Activated T-helper 2 cell treated with anti-CD3 and anti-CD28 coated beads, Interferon-gamma antibody, Interleukin-2, Interleukin-4, amounts not matched to agents 10 μg/mL and 5 μg/mL and 100 μg/mL, durations not matched to agents 14 hours and 24 hours and 36 hours (primary cell): ENCODE measurements at regions of chr9 and their contacts with region 1.

Region 1: DNA sequence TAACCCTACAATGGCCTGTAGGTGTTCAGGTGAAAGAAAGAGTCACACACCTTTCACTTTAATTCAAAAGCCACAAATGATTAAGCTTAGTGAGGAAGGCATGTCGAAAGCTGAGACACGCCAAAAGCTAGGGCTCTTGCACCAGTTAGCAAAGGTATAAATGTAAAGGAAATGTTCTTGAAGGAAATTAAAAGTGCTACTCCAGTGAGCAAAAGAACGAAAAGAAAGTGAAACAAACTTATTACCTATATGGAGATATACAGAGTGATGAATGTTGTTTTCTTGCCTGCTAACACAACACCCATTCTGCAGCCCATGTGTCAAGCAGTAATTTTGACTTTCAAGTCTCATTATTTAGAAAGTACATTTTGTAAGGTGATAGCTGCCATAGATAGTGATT is 254.2 kb upstream of the SLC24A2 start:
- DNase-seq: no peak
- H3K4me3 Mint-ChIP-seq: peak overlapping the region; percentile 71
- H3K27ac Mint-ChIP-seq: peak overlapping the region; percentile 70
- H3K4me1 Mint-ChIP-seq: peaks cover 30% of the 10 kb centered on the region
- H3K27me3 Mint-ChIP-seq: peaks cover 2% of the 10 kb centered on the region

Region 2: DNA sequence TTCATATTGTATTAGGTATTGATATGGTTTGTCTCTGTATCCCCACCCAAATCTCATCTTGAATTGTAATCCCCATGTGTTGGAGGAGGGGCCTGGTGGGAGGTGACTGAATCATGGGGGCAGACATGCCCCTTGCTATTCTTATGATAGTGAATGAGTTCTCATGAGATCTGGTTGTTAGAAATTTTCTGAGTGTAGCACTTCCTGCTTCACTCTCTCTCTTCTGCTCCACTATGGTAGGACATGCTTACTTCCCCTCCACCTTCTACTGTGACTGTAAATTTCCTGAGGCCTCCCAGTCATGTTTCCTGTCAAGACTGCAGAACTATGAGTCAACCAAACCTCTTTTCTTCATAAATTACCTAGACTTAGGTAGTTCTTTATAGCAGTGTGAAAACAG is 66.8 kb before region 1 on chr9:
- intact Hi-C with region 1: loop called (anchors 2 kb)
- DNase-seq: no peak
- H3K4me3 Mint-ChIP-seq: no peak overlapping the region
- H3K27ac Mint-ChIP-seq: peak overlapping the region; percentile 83
- H3K4me1 Mint-ChIP-seq: peaks cover 28% of the 10 kb centered on the region
- H3K27me3 Mint-ChIP-seq: no peaks in the 10 kb centered on the region

Region 3: GRCh38 chr9:20197976-20198685 is 155.1 kb after region 1 on chr9:
- intact Hi-C with region 1: no loop called
- DNase-seq: no peak
- H3K4me3 Mint-ChIP-seq: no peak overlapping the region
- H3K27ac Mint-ChIP-seq: no peak overlapping the region
- H3K4me1 Mint-ChIP-seq: peaks cover 10% of the 10 kb centered on the region
- H3K27me3 Mint-ChIP-seq: peaks cover 4% of the 10 kb centered on the region